K562 (cell line): ENCODE measurements at regions of chr11 and their contacts with region 1.

Region 1: DNA sequence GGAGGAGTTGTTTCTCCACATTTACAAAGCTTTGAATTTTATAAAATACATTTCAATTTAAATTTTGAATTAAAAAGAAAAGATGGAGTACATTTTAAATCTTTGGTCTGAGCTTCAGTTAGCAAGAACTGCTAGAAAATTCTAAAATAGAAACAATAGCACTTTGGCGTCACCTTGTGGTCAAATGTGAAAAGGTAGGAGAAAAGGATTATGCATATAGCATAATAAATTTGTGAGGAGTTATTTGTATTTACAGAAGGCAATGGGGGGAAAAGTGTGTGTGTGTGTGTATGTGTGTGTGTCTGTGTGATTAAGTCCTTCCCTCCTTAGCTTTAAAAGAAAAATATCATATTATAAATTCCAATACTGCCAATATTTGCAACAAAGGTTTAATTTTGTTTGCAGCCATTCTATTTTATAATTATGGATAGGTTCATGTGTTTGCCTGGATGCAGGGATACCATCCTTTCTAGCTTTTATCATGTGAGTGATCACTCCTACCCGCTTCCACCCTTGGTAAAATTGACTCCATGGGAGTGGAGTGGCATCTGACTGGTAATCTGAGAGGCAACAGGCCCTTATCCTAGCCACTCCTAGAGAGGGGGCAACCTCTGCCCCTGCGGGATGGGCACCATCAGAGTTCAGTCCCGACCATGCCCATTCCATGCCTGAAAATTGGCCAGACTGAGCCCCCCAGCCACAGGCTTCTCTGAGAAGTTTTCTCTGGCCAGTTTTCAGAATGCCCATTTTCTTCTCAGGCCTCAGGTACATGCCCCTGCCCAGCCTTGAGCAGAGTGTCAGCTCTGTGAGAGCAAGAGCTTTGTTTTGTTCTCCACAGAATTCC is 13.6 kb upstream of the LGR4 start:
- DNase-seq: peak; percentile 44 to 75 (median 45)
- ATAC-seq: peak; percentile 81
- H3K4me3 ChIP-seq: no peak overlapping the region
- H3K27ac ChIP-seq: no peak overlapping the region
- H3K4me1 ChIP-seq: no peaks in the 10 kb centered on the region
- H3K27me3 ChIP-seq: no peaks in the 10 kb centered on the region
- CTCF ChIP-seq: peak; percentile 58 to 98 (median 67); a peak in 4 of 6 replicates
- EP300 ChIP-seq: no peak
- POLR2A ChIP-seq: no peak
- RAD21 ChIP-seq: peak; percentile 97 to 99

Region 2: DNA sequence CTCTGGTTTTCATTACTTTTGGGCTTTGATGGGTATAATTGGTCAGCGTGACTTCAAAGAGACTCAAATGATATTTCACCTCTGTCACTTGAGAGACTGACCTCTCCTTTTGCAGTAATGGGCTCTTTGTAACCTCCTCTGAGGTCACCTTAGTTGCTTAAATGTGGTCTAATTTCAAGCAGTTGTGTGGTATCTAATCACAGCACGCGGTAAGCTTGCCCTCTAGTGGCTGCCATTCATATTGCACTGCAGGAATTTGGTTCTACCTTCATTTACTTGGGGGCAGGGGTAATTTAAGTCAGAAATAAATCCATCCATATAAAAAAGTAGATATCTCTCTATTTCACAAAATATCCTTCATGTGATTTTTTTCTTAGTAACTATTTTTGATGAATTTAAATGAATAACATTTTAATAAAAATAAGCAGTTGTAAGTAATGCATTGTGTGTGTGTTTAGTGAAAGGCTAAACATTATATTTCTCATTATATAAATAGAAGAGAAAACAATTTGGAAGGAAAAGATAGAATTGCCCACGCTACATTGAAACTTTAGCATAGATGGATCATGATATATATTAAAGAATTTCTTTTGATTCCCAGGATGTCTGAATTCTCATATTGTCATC is 1209.2 kb before region 1 on chr11:
- CTCF ChIA-PET with region 1: no interaction called
- POLR2A ChIA-PET with region 1: no interaction called
- in situ Hi-C with region 1: loop called (anchors 25 kb)
- intact Hi-C with region 1: no loop called
- DNase-seq: peak; percentile 13 to 57 (median 53)
- ATAC-seq: peak; percentile 75; the same call in 2 of the 3 replicates
- H3K4me3 ChIP-seq: no peak overlapping the region
- H3K27ac ChIP-seq: no peak overlapping the region
- H3K4me1 ChIP-seq: no peaks in the 10 kb centered on the region
- H3K27me3 ChIP-seq: no peaks in the 10 kb centered on the region
- CTCF ChIP-seq: peak; percentile 60 to 85 (median 78)
- EP300 ChIP-seq: no peak
- POLR2A ChIP-seq: no peak
- RAD21 ChIP-seq: peak; percentile 66 to 81

Region 3: DNA sequence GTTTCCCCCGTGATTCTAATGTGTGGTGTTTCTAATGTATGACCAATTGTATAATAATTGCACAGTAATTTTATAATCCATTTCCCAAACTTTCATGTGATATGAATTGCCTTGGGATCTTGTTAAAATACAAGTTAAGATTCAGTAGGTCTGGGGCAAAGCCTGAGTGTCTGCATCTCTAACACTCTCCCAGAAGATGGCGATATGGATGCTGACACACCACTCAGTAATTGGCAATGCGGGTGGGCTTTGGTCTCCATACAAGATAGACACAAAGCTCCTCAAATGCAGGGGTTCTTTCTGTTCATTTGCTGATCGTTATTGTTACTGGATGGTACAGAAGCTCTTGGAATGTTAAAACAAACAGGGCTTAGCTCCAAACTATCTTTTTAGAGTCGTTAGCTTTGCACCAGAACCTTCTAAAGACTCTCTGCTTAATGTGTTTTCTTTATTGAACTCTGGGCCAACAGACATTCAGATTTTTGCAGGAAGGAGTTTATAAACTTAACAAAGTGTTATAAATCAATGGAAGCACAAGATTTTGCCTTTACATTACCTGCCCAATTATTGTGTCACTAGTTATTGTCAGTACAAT is 1199.6 kb before region 1 on chr11:
- CTCF ChIA-PET with region 1: interaction called, 3 read pairs
- POLR2A ChIA-PET with region 1: no interaction called
- in situ Hi-C with region 1: loop called (anchors 25 kb)
- intact Hi-C with region 1: loop called (anchors 5 kb)
- DNase-seq: peak in 1 of 4 experiments; percentile 5
- ATAC-seq: 0 out of 3 replicates have a peak, but pooled peaks have one; percentile 48
- H3K4me3 ChIP-seq: no peak overlapping the region
- H3K27ac ChIP-seq: no peak overlapping the region
- H3K4me1 ChIP-seq: no peaks in the 10 kb centered on the region
- H3K27me3 ChIP-seq: no peaks in the 10 kb centered on the region
- CTCF ChIP-seq: peak; percentile 11 to 39 (median 17); a peak in 2 of 6 replicates
- EP300 ChIP-seq: no peak
- POLR2A ChIP-seq: no peak
- RAD21 ChIP-seq: 0 out of 4 replicates have a peak, but pooled peaks of 1 of the 2 experiments have one; percentile 5

Region 4: DNA sequence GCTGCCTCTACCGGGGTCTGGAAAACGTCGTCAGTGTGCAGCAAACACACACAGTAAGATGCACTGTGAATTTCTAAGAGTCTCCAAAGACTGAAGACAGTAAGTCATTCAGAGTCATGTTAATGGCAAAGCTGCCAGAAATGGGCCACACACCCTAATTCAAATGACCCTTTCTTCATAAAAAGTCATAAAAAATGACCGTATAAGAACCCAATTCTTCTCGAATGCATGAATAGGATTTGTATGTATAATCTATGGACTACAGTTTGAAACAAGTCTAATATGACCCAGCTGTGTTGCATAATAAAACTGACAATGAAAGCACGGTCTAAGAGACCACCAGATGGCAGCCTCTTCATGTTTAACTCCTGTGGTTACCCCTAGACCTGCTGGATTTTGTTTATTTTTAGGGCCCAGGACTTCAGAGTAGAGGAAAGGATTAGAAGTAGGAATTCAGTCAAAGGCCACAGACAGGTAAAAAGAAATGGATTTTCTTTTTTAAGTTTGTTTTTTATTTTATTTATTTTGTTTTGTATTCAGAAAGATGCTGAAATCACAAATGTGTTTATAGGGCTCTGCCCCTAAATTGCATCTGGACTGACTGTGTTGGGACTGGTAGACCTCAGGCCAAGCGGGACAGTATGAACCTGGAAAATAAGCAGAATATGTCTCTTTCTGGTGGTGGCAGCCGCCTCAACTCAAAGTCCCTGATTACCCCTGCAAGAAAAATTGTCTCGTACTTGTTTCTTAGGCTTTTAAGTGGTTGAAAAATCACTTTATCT is 732.2 kb before region 1 on chr11:
- CTCF ChIA-PET with region 1: interaction called, 10 read pairs
- POLR2A ChIA-PET with region 1: no interaction called
- in situ Hi-C with region 1: loop called (anchors 25 kb)
- intact Hi-C with region 1: loop called (anchors 5 kb)
- DNase-seq: peak in 3 of 4 experiments; percentile 7 to 13 (median 8)
- ATAC-seq: no peak
- H3K4me3 ChIP-seq: no peak overlapping the region
- H3K27ac ChIP-seq: no peak overlapping the region
- H3K4me1 ChIP-seq: no peaks in the 10 kb centered on the region
- H3K27me3 ChIP-seq: no peaks in the 10 kb centered on the region
- CTCF ChIP-seq: peak in 2 of 3 experiments; percentile 16 to 29; a peak in 2 of 6 replicates
- EP300 ChIP-seq: no peak
- POLR2A ChIP-seq: no peak
- RAD21 ChIP-seq: peak; percentile 66 to 67

Region 5: DNA sequence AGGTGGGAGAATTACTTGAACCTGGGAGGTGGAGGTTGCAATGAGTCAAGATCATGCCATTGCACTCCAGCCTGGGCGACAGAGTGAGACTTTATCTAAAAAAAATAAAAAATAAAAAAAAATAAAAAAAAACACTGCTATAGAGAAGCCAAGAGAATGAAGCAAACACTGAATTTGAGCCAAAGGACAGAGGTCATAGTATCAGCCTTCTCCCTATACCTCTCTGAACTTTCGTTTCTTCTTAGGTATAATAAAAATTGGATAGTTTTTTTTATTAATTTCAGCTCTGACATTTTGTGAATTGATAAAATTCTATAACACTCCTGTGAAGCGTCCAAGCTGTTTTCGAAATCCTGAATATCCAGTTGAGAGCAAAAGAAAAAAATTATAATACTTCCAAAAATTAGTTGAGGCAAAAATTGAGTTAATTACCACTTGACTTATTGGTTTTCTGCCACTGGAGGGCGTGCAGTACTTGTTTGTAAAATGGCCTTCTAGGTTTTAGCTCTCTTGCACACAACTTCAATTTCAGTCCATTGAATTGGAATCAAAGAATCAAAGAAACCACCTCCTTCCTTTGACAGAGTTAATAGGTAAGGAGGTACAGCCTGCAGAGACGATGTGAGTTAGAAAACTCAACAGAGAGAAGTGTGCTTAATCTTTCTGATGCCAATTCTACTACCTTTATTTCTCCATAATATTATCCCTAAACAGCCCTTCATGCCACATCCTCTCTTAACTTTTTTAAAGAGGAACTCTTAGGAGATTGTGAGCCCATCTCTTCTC is 302.3 kb before region 1 on chr11:
- CTCF ChIA-PET with region 1: interaction called, 52 read pairs
- POLR2A ChIA-PET with region 1: no interaction called
- in situ Hi-C with region 1: loop called (anchors 5 kb)
- intact Hi-C with region 1: loop called (anchors 1 kb)
- DNase-seq: peak; percentile 29 to 74 (median 36)
- ATAC-seq: peak; percentile 81
- H3K4me3 ChIP-seq: no peak overlapping the region
- H3K27ac ChIP-seq: no peak overlapping the region
- H3K4me1 ChIP-seq: peaks cover 2 to 12% of the 10 kb centered on the region in 2 experiments; a peak in 2 of 5 replicates
- H3K27me3 ChIP-seq: no peaks in the 10 kb centered on the region
- CTCF ChIP-seq: peak; percentile 61 to 92 (median 64); a peak in 5 of 6 replicates
- EP300 ChIP-seq: no peak
- POLR2A ChIP-seq: no peak
- RAD21 ChIP-seq: peak; percentile 96

Region 6: GRCh38 chr11:27296497-27296896 is 189.7 kb before region 1 on chr11:
- CTCF ChIA-PET with region 1: no interaction called
- POLR2A ChIA-PET with region 1: no interaction called
- in situ Hi-C with region 1: no loop called
- intact Hi-C with region 1: loop called (anchors 5 kb)
- DNase-seq: peak; percentile 22 to 67 (median 38)
- ATAC-seq: peak; percentile 95
- H3K4me3 ChIP-seq: no peak overlapping the region
- H3K27ac ChIP-seq: no peak overlapping the region
- H3K4me1 ChIP-seq: no peaks in the 10 kb centered on the region
- H3K27me3 ChIP-seq: no peaks in the 10 kb centered on the region
- CTCF ChIP-seq: peak; percentile 52 to 81 (median 64); a peak in 5 of 6 replicates
- EP300 ChIP-seq: no peak
- POLR2A ChIP-seq: no peak
- RAD21 ChIP-seq: peak; percentile 82 to 87

Region 7: GRCh38 chr11:27362749-27363575 is 123.2 kb before region 1 on chr11 and contains the start of gene CCDC34:
- CTCF ChIA-PET with region 1: no interaction called
- POLR2A ChIA-PET with region 1: no interaction called
- in situ Hi-C with region 1: loop called (anchors 5 kb)
- intact Hi-C with region 1: no loop called
- DNase-seq: peak; percentile 96 to 98 (median 96)
- ATAC-seq: peak; percentile 96
- H3K4me3 ChIP-seq: peak within 1 kb of the TSS; percentile 67
- H3K27ac ChIP-seq: peak within 1 kb of the TSS; percentile 58; the same call in 2 of the 3 replicates
- H3K4me1 ChIP-seq: peaks cover 11 to 24% of the 10 kb centered on the region in 2 experiments
- H3K27me3 ChIP-seq: no peaks in the 10 kb centered on the region
- CTCF ChIP-seq: no peak
- EP300 ChIP-seq: no peak
- POLR2A ChIP-seq: peak; percentile 73
- RAD21 ChIP-seq: no peak
- polyA plus RNA-seq, gene CCDC34: 6.2 to 6.6 TPM